Naive thymus-derived CD8-positive, alpha-beta T cell (primary cell): ENCODE measurements at regions of chr20 and their contacts with region 1.

Region 1: DNA sequence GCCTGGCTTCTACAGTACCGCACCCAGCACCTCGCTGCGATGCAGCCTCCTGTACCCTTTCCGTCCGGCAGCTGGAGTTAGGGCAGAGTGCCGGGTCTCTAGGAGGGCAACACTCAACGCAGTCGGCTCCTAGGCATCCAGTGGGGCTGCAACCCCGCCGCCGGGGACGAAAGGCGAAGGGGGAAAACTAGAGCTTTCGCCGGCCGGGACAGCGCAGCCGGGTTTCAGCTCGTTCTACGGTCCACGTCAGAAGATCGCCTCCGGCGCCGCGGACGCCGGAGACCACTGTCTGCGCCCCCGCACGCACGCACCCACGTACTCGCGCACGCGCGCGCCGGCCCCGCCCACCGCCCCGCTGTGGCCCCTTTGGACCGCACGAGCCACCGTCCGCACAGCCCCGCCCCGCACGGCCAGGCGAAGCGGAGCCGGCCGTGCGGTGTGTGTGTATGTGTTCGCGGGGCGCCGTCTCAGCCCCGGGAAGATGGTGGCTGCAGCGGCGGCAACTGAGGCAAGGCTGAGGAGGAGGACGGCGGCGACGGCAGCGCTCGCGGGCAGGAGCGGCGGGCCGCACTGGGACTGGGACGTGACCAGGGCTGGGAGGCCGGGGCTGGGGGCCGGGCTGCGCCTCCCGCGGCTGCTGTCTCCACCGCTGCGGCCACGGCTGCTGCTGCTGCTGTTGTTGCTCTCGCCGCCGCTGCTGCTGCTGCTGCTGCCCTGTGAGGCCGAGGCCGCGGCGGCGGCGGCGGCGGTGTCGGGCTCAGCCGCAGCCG is at the start of gene ATRN:
- DNase-seq: peak; percentile 74 to 92 (median 86)
- ATAC-seq: peak; percentile 86 to 90
- H3K4me3 Mint-ChIP-seq: peak within 1 kb of the TSS; percentile 89 to 96 (median 94)
- H3K27ac Mint-ChIP-seq: peak within 1 kb of the TSS; percentile 74 to 94 (median 90)
- H3K4me1 Mint-ChIP-seq: peaks cover 25 to 43% (median 38%) of the 10 kb centered on the region in 4 donors
- H3K27me3 Mint-ChIP-seq: peaks cover 0 to 7% (median 0%) of the 10 kb centered on the region in 5 donors
- polyA plus RNA-seq, gene ATRN: 7.0 to 9.4 (median 7.6) TPM

Region 2: DNA sequence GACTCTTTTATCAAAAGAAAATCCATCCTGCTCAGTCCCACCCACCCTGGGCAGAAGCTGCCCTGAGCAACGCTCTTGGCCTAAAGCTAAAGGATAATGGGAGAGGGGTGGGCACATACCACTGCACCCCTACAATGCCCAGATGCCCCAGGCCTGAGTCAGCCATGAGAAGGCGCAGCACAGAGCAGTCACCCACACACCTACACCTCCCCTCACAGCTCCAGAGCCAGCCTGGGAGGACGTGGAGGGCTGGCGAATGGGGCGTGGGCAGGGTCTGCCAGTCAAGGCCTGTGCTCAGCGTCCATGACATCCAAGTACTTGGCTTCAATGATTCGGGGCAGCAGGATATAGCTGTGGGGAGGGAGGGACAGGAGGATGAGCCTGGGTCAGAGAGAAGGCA is 243.3 kb before region 1 on chr20:
- POLR2A ChIA-PET with region 1: no interaction called
- DNase-seq: no peak
- ATAC-seq: no peak
- H3K4me3 Mint-ChIP-seq: no peak overlapping the region
- H3K27ac Mint-ChIP-seq: no peak overlapping the region
- H3K4me1 Mint-ChIP-seq: peaks cover 3 to 20% (median 16%) of the 10 kb centered on the region in 4 donors
- H3K27me3 Mint-ChIP-seq: no peaks in the 10 kb centered on the region

Region 3: DNA sequence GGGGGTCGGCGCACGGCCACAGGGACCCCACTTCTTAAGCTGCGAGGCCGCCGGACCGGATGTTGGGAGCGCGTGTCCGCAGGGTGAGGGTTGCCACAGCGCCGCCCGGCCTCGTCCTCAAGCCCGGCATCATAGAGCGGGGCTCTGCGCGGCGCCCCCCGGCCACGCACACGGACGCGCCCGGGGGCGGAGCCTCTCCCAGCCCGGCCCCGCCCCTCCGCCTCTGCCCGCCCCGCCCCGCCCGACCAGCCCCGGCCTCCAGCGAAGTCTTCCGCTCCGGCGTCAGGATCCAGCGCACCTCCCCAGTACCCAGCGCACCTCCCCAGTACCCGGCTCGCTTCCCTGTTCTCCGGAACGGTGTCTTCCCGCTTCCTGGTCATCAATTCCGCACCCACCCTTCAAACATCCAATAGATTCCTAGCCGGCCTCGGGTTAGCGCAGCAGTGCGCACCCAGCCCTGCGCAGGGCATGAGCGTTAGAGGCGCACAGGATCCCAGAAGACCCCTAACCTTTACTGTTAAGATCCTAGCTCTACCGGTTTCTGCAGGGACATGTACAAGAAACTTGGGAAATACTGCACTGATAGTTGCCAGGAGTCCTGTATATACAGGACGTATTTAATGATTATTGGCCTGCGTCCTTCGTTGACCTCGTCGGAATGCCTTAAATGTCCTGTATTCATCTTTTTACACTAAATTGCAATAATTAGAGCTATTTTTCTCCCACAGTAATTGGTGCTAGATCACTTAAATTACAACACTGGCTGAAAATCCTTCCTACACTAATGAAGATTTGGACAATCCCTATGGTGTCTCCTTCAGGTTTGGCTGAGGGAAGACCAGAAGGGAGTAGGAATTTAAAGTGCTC is 62.8 kb before region 1 on chr20:
- POLR2A ChIA-PET with region 1: interaction called, 13 read pairs
- DNase-seq: peak; percentile 44 to 82 (median 72)
- ATAC-seq: peak; percentile 59 to 62
- H3K4me3 Mint-ChIP-seq: peak overlapping the region; percentile 96 to 100 (median 98)
- H3K27ac Mint-ChIP-seq: peak overlapping the region; percentile 85 to 98 (median 97)
- H3K4me1 Mint-ChIP-seq: peaks cover 13 to 36% (median 32%) of the 10 kb centered on the region in 4 donors
- H3K27me3 Mint-ChIP-seq: no peaks in the 10 kb centered on the region

Region 4: DNA sequence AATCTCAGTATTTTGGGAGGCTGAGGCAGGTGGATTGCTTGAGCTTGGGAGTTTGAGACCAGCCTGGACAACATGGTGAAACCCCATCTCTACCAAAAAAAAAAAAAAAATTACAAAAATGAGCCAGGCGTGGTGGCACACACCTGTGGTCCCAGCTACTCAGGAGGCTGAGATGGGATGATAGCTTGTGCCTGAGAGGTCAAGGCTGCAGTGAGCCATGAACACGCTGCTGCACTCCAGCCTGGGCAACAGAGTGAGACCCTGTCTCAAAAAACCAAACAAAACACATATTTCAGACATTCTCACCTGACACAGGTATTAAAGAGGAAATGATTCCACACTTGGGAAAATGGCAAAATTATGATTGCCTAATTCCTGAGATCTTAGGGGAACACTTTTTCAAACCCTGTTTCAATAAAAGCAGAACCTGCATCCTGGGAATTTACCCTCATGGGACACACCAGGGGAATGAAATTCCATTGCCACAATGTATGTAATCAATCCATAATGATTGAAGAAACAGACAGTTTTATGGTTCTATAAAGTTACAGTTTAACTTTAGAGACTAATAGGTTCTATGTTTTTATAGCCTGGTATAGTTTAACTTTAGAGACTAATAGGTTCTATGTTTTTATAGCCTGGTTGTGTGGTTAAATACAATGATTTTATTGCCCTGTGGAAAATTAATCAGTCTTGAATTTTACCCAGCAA is 33.8 kb before region 1 on chr20:
- POLR2A ChIA-PET with region 1: no interaction called
- DNase-seq: no peak
- ATAC-seq: no peak
- H3K4me3 Mint-ChIP-seq: no peak overlapping the region
- H3K27ac Mint-ChIP-seq: no peak overlapping the region
- H3K4me1 Mint-ChIP-seq: peaks cover 0 to 2% (median 0%) of the 10 kb centered on the region in 4 donors
- H3K27me3 Mint-ChIP-seq: peaks cover 3 to 9% (median 4%) of the 10 kb centered on the region in 5 donors

Region 5: DNA sequence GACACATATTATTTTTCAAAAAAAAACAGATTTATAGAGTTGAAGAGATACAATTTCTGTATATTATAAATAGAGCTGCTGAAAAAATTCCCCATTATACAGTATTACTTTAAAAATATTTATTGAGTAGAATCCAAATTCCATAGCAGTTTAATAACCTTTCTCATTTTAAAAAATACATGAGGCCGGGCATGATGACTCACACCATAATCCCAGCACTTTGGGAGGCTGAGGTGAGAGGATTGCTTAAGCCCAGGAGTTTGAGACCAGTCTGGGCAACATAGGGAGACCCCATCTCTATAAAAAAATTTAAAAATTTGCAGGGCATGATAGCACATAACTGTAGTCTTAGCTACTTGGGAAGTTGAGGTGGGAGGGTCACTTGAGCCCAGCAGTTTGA is 13.0 kb after region 1 on chr20:
- POLR2A ChIA-PET with region 1: no interaction called
- DNase-seq: no peak
- ATAC-seq: no peak
- H3K4me3 Mint-ChIP-seq: no peak overlapping the region
- H3K27ac Mint-ChIP-seq: no peak overlapping the region
- H3K4me1 Mint-ChIP-seq: peaks cover 21 to 40% (median 38%) of the 10 kb centered on the region in 4 donors
- H3K27me3 Mint-ChIP-seq: no peaks in the 10 kb centered on the region